Adrenal gland (tissue), 19 donors: ENCODE measurements at regions of chr3 and their contacts with region 1.

Region 1: DNA sequence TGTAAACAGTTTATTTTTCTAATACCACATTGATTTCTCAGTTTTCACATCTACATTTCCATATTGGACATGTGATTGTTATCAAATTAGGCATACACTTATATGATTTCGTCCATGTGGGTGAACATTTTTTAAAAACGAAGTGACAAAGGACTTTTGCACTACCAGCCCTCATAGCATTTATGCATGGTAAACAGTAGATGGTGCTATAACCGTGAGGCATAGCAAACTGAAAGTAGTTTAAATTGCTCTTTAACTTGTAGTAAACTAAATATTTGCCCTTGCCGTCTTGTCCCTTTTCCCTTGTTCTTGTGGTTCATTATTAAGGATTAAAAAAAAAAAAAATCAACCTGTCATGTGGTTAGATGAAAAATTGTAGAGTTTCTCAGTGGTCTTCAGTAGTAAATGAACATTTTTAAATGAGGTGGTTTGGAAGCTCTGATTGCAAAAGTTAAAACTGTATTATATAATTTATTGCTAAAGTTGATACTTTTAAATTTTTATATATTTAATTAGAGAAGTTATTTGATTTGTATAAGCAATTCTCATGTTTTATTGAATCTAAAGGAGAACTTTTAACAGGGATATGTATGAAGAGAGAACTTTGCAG is 24.0 kb downstream of the STX19 start:
- DNase-seq: no peak
- H3K4me3 ChIP-seq: peak overlapping the region in 1 of 4 donors; percentile 42
- H3K27ac ChIP-seq: no peak overlapping the region
- H3K4me1 ChIP-seq: peaks cover 0 to 20% of the 10 kb centered on the region in 2 donors
- H3K27me3 ChIP-seq: no peaks in the 10 kb centered on the region
- CTCF ChIP-seq: peak; percentile 56 to 81 (median 76)
- POLR2A ChIP-seq: no peak

Region 2: DNA sequence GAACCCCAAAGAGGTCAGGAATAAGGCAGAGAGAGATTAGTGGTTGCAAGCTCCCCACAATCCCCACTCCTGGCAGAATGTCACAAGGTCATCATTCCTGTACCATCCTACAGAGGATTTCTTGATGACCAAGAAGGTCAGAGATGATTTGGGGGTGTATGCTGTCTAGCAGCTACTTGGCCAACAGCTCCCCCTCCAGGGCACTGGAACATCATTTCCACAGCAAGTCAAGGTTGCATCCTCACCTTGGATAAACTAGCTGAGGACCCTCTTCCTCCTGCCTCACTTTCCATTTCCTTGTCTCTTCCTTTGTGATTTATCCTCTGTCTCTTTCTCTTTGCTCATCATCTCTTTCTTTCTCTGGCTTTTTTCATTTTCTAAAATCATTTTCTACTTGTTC is 137.0 kb before region 1 on chr3:
- intact Hi-C with region 1: no loop called
- DNase-seq: no peak
- H3K4me3 ChIP-seq: no peak overlapping the region
- H3K27ac ChIP-seq: no peak overlapping the region
- H3K4me1 ChIP-seq: no peaks in the 10 kb centered on the region
- H3K27me3 ChIP-seq: no peaks in the 10 kb centered on the region
- CTCF ChIP-seq: no peak
- POLR2A ChIP-seq: no peak

Region 3: DNA sequence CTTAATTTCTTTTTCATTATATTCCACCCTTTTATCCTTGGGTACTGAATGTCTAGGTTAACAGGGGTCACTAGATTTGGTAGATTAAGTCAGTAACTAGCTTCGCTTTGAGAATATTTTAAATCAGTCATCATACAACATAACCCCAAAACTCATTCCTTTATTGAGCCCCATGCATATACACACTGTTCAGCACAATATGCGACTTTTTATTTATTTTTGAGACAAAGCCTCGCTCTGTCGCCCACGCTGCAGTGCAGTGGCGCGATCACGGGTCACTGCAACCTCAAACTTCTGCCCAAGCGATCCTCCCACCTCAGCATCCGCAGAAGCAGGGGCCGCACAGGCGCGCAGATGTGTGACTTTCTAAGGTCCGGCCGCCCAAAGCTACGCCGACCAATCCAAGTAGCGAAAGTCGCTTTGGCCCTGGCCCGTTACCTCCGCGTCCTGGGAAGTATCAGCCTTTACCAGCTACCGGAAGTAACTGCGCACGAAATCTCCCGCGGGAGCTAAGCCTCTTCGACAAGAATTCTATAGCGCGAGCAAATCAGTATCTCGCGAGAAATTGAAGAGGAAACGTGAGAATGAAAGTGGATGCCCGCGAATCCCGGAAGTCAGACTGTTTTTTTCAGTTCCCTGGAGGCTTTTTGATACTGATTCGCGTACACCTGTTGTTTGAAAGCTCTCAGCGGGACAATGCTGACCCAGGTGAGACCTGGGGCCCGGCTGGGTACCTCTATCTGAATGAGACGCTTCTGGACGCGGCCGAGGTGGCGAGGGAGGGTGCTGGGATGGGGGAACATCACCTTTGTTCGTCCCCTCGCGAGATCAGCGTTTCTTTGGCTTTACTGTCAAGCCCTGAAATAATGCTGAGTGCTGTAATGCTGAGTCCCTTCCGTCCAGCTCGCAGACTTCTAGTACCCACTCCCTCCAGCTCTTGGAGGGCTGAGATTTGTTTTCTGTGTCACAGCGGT is 58.3 kb after region 1 on chr3 and contains the starts of genes DHFR2 and NSUN3:
- intact Hi-C with region 1: loop called (anchors 10 kb)
- DNase-seq: peak; percentile 90 to 98 (median 95)
- H3K4me3 ChIP-seq: peak within 1 kb of the TSS; percentile 19 to 89 (median 67)
- H3K27ac ChIP-seq: peak within 1 kb of the TSS; percentile 66 to 94 (median 91)
- H3K4me1 ChIP-seq: peaks cover 8 to 20% of the 10 kb centered on the region in 2 donors
- H3K27me3 ChIP-seq: no peaks in the 10 kb centered on the region
- CTCF ChIP-seq: no peak
- POLR2A ChIP-seq: peak; percentile 37 to 80
- total RNA-seq, gene DHFR2: 2.3 to 12.3 (median 7.7) TPM
- total RNA-seq, gene NSUN3: 5.1 to 18.9 (median 12.4) TPM